ENCODE measurements at regions of chr7 and their contacts with region 1.

Region 1: GRCh38 chr7:80186721-80187120 is 52.1 kb downstream of the GNAI1 start:
- DNase-seq: peak in 22 of 42 donors; percentile 7 to 73 (median 36)

Region 2: DNA sequence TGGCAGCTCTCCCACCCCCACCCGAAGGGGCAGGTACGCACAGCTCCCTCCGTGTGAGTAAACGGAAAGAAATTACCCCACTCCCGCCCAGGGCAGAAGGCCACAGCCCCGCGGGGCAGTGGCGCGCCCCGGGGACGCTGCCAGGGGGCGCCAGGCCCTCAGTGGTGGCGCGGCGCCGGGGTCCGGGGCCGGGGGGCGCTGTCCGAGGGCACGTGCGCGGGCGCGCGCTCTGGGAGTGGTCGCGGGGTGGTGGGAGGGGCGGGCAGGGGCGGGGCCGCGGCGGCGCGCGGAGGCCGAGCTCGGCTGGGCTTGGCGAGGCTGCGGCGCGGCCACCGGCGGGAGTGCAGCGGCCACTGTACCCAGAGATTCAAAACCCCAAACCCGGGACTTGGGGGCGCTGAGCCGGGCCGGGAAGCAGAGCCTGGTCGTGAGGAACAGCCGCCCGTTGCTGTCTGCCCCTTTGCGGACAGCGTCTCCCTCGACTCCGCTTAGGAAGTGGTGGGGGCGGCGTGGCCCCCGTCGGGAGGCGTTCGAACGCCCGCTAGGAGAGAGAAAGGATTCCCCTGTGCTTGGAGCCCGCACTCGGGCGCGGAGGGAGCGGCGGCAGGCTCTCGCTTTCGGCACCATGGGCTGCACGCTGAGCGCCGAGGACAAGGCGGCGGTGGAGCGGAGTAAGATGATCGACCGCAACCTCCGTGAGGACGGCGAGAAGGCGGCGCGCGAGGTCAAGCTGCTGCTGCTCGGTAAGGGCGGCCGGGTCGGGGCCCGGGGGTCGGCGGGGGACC is 52.0 kb before region 1 on chr7 and contains the start of gene GNAI1:
- intact Hi-C with region 1: loop called (anchors 10 kb)
- DNase-seq: peak; percentile 28 to 89 (median 72)

Measured in head of caudate nucleus (tissue), 42 donors.